Posterior vena cava (tissue), 2 donors: ENCODE measurements at regions of chr7 and their contacts with region 1.

Region 1: GRCh38 chr7:76126632-76127031 is 75.1 kb upstream of the SRRM3 start:
- DNase-seq: no peak

Region 2: GRCh38 chr7:76086070-76086469 is 40.6 kb before region 1 on chr7:
- intact Hi-C with region 1: loop called in 1 of 2 experiments (anchors 2 kb)
- DNase-seq: no peak

Region 3: GRCh38 chr7:76403780-76404494 is 277.3 kb after region 1 on chr7:
- intact Hi-C with region 1: no loop called
- DNase-seq: no peak